ENCODE measurements at regions of chr3 and their contacts with region 1.

Region 1: DNA sequence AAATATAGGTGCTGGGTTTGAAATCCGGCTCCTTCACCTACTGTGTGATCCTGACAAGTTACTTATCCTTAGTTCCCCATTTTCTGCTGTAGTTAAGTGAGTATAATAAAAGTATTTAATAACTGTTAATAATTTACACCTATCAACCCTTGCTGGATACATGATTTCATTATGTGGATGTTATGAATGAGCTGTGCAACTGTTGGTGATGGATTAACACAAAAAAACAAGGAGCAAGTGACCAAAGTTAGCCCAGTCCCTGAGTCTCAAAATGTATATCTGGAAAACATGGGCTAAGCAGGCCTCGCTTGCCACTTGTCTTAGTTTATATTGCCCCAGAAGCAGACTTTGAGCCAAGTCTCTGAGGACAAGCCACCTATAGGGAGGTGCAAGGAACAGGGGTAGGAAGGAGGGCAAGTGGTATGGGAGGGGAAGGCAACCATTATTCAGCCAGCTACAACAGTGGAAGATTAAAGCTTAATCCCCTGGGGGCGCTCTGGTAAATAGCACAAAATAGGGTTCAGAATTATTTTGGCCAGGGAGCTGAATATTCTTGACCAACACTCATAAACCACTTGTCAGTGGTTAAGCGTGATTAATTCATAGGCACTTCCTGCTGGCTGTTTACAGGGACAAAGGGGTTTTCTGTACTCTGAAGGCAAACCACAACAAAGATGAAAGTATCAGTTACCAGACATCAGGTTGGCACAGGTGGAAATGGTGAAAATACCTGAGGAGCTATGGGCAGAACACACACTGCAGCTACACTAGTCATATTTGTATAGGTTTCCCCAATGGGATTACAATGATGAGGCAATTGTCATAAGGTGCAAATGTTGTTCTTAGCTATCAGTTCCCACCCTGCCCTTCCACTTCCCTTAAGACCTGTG is 76.2 kb downstream of the TRIM42 start:
- DNase-seq: peak; percentile 73
- H3K4me3 ChIP-seq: peak overlapping the region; percentile 27
- H3K27ac ChIP-seq: peak overlapping the region; percentile 79
- H3K4me1 ChIP-seq: peaks cover 62% of the 10 kb centered on the region
- CTCF ChIP-seq: peak; percentile 70

Region 2: GRCh38 chr3:140296796-140297352 is 457.2 kb before region 1 on chr3:
- CTCF ChIA-PET with region 1: no interaction called
- POLR2A ChIA-PET with region 1: no interaction called
- intact Hi-C with region 1: no loop called
- DNase-seq: no peak
- H3K4me3 ChIP-seq: no peak overlapping the region
- H3K27ac ChIP-seq: no peak overlapping the region
- H3K4me1 ChIP-seq: no peaks in the 10 kb centered on the region
- CTCF ChIP-seq: no peak

Region 3: GRCh38 chr3:140816372-140817195 is 62.5 kb after region 1 on chr3:
- CTCF ChIA-PET with region 1: no interaction called
- POLR2A ChIA-PET with region 1: no interaction called
- intact Hi-C with region 1: loop called (anchors 2 kb)
- DNase-seq: peak; percentile 78
- H3K4me3 ChIP-seq: peak overlapping the region; percentile 2
- H3K27ac ChIP-seq: peak overlapping the region; percentile 39
- H3K4me1 ChIP-seq: peaks cover 24% of the 10 kb centered on the region
- CTCF ChIP-seq: no peak

Region 4: DNA sequence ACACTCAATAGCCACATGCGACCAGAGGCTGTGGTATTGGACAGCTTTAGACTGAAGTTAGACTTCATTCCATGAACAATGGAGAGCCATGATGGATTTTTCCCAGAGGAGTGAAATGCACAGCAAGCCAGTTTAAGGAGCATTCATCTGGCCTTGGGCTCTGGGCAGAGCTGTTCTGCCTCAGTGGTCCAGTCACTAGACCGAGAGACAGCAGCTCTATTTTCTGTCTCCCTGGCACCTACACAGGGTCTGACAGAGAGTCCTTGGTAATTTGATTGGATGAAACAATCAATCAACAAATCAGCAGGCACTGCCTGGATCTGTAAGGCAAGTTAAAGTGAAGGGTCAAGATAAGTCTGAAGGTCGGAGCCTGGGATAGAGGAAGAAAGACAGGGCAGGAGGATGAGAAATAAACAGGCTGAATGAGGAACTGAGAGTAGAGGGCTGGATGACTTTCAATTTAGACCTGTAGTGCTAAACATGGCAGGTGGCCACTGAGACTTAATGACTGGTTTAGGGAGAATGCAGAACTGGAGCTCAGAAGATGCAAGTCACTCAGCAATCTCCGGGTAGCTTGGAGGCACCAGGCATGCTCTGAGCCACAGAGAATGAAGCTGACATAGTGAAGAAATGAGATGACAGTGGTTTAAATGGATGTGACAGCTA is 89.0 kb after region 1 on chr3:
- CTCF ChIA-PET with region 1: interaction called, 4 read pairs
- POLR2A ChIA-PET with region 1: interaction called, 14 read pairs
- intact Hi-C with region 1: loop called (anchors 1 kb)
- DNase-seq: peak; percentile 95
- H3K4me3 ChIP-seq: peak overlapping the region; percentile 53
- H3K27ac ChIP-seq: peak overlapping the region; percentile 92
- H3K4me1 ChIP-seq: peaks cover 69% of the 10 kb centered on the region
- CTCF ChIP-seq: no peak

Region 5: DNA sequence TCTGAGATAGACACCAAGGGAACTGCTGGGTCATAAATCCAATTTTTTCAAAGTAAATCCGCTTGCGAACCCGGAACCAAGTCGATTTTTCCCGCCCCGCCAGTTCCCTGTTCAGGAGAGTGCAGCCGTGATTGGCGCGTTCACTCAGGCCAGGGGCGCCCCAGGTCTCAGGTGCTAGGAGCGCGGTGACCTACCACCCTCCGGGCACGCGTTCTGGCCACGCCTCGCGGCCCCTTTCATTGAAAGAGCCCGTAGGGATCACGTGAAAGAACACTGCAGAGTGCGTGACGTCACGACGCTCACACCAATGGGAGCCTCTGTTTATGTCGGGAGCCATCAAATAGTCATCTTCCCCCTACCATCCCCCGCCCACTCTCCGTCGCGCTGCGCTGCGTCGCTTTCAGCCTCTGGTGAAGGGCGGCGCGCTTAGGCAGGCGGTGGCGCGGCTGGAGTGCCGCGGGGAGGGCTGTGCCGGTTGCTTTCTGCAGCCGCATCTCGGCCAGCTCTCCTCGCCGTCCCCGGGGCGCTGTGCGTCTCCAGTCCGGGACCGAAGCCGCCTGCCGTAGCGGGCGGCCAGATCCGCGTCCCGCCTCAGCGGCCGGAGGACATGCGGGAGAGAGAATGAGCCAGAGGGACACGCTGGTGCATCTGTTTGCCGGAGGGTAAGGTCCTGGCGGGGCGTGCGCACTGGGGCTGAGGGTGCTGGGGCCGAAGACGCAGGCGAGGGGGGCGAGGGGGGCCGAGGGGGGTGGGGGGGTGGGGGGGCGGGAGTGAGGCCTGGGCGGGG is 187.5 kb after region 1 on chr3 and contains the start of gene SLC25A36:
- CTCF ChIA-PET with region 1: no interaction called
- POLR2A ChIA-PET with region 1: no interaction called
- intact Hi-C with region 1: loop called (anchors 5 kb)
- DNase-seq: peak; percentile 99
- H3K4me3 ChIP-seq: peak within 1 kb of the TSS; percentile 82
- H3K27ac ChIP-seq: peak within 1 kb of the TSS; percentile 64
- H3K4me1 ChIP-seq: peaks cover 30% of the 10 kb centered on the region
- CTCF ChIP-seq: no peak
- total RNA-seq, gene SLC25A36: 71.8 and 91.3 TPM in 2 replicates